ENCODE measurements at regions of chr1 and their contacts with region 1.

Region 1: DNA sequence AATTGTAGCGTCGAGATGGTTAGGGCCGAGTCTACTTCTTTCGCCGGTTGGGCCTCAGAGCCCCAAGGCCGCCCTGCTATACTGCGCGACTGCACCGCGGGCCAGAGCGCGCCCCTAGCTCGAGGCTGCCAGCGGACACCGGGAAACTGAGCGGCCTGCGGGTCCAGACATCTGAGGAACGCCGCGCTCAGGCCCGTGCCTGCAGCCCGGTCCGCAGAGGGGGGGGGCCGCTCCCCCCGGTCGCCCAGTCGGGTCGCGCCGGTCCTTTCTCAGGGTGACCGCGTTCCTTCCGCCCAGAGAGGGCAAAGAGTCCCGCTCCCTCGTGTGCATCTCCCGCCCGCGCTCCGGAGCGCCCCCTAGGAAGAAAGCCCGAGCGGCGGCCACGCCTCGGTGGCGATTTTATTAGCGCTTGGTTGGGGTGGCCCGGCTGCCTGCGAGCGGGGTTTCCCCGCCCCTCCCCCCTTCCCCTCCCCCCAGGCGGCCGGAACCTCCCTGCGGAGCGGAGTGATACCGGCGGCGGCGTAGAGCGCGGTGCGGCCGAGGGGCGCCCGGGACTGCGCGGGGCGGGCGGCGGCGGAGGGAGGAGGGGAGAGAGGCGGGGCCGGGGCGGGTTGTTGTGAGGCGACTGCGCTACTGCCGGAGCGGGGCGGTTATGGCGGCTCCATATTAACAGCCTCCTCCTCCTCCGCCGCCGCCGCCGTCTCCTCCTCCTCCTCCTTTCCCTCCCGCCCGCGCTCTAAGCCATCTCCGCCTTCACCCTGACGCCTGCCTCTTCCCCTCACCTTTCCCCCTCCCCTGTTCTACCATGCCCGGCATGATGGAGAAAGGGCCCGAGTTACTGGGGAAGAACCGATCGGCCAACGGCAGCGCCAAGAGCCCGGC is at the start of gene RCOR3:
- DNase-seq: peak; percentile 88 to 95 (median 92)
- ATAC-seq: peak; percentile 76
- H3K4me3 ChIP-seq: peak within 1 kb of the TSS; percentile 89
- H3K4me3 Mint-ChIP-seq: peak within 1 kb of the TSS; percentile 94
- H3K27ac ChIP-seq: peak within 1 kb of the TSS; percentile 77 to 87
- H3K27ac Mint-ChIP-seq: peak within 1 kb of the TSS; percentile 94
- H3K4me1 ChIP-seq: peaks cover 16% of the 10 kb centered on the region
- H3K4me1 Mint-ChIP-seq: peaks cover 26% of the 10 kb centered on the region
- H3K27me3 ChIP-seq: no peaks in the 10 kb centered on the region
- H3K27me3 Mint-ChIP-seq: no peaks in the 10 kb centered on the region
- CTCF ChIP-seq: peak; percentile 59
- total RNA-seq, gene RCOR3: 55.7 to 60.5 TPM

Region 2: GRCh38 chr1:211092955-211093354 is 166.0 kb before region 1 on chr1:
- CTCF ChIA-PET with region 1: no interaction called
- POLR2A ChIA-PET with region 1: no interaction called
- intact Hi-C with region 1: no loop called
- DNase-seq: no peak
- ATAC-seq: no peak
- H3K4me3 ChIP-seq: no peak overlapping the region
- H3K4me3 Mint-ChIP-seq: no peak overlapping the region
- H3K27ac ChIP-seq: no peak overlapping the region
- H3K27ac Mint-ChIP-seq: no peak overlapping the region
- H3K4me1 ChIP-seq: no peaks in the 10 kb centered on the region
- H3K4me1 Mint-ChIP-seq: no peaks in the 10 kb centered on the region
- H3K27me3 ChIP-seq: peaks cover 0 to 1% of the 10 kb centered on the region in 2 experiments
- H3K27me3 Mint-ChIP-seq: peaks cover 15% of the 10 kb centered on the region
- CTCF ChIP-seq: no peak

Region 3: DNA sequence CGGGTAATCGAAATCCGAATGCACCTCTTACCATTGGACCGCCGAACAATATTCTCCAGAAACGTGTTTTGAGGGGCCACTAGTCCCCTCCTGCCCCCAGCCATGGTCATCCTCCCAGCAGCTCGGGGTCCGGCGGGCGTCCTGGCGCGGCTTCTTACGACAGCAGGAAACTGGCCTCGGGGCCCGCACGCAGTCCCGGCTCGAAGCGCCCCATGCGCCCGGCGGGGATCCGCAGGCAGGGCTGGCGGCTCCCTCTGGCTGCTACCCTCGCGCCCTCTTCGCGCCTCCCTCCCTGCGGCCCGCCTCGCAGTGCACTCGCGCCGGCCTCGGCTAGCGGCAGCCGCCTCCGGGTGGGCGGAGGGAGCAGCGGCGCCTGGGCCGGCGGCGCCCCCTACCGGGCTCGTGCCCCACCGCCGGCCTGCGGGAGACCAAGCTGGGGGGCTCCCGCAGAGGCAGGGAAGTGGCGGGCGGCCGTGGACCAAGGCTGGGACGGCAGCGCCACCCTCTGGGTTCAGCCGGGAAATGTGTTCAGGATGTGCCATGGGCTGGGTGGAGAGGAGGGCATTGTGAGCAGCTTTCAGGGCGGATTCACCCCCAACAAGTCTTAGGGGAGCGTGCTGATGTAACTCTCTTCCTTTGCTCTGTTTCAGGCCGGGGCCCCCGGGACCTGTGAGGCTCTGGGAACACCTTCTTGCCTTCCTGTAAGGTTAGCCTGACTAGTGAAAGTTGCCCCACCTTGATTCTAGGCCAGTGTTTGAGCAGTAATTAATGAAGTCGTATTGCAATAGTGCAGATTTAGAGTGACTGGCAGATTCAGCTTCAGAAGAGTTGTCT is 124.9 kb before region 1 on chr1 and contains the start of gene KCNH1:
- CTCF ChIA-PET with region 1: interaction called, 13 read pairs
- POLR2A ChIA-PET with region 1: interaction called, 5 read pairs
- intact Hi-C with region 1: loop called (anchors 2 kb)
- DNase-seq: peak; percentile 52 to 87 (median 66)
- ATAC-seq: peak; percentile 88
- H3K4me3 ChIP-seq: peak within 1 kb of the TSS; percentile 51
- H3K4me3 Mint-ChIP-seq: peak within 1 kb of the TSS; percentile 71
- H3K27ac ChIP-seq: no peak within 1 kb of the TSS
- H3K27ac Mint-ChIP-seq: no peak within 1 kb of the TSS
- H3K4me1 ChIP-seq: peaks cover 18% of the 10 kb centered on the region
- H3K4me1 Mint-ChIP-seq: peaks cover 9% of the 10 kb centered on the region
- H3K27me3 ChIP-seq: peaks cover 26 to 64% of the 10 kb centered on the region in 2 experiments
- H3K27me3 Mint-ChIP-seq: peaks cover 80% of the 10 kb centered on the region
- CTCF ChIP-seq: peak; percentile 77
- total RNA-seq, gene KCNH1: not detected

Region 4: DNA sequence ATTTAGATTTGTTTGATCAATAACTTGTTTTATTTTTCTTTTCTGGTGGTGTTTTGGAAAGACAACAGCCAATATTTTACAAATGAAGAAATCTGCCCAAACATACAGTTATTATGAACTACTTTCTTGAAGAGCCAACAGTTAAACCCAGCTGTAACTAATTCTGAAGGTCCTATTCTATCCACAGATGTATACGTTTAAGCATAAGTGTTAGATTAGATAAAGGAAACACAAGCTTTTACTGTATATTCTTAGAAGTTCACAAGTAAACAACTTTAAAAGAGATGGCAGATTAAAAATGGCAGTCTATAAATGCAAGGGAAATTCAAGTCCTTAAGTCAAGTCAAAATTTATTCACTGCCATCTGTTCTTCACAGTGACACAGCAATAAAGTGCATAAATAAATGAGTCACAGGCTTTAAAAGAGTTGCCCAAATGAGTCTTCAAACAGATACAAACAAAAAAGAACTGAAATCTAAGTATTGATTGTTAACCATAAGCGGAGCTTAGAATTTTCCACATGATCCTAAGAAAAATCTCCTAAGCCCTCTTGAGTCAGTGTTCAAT is 75.2 kb before region 1 on chr1:
- CTCF ChIA-PET with region 1: no interaction called
- POLR2A ChIA-PET with region 1: no interaction called
- intact Hi-C with region 1: no loop called
- DNase-seq: no peak
- ATAC-seq: no peak
- H3K4me3 ChIP-seq: no peak overlapping the region
- H3K4me3 Mint-ChIP-seq: no peak overlapping the region
- H3K27ac ChIP-seq: no peak overlapping the region
- H3K27ac Mint-ChIP-seq: no peak overlapping the region
- H3K4me1 ChIP-seq: no peaks in the 10 kb centered on the region
- H3K4me1 Mint-ChIP-seq: no peaks in the 10 kb centered on the region
- H3K27me3 ChIP-seq: no peaks in the 10 kb centered on the region
- H3K27me3 Mint-ChIP-seq: peaks cover 14% of the 10 kb centered on the region
- CTCF ChIP-seq: no peak

Region 5: DNA sequence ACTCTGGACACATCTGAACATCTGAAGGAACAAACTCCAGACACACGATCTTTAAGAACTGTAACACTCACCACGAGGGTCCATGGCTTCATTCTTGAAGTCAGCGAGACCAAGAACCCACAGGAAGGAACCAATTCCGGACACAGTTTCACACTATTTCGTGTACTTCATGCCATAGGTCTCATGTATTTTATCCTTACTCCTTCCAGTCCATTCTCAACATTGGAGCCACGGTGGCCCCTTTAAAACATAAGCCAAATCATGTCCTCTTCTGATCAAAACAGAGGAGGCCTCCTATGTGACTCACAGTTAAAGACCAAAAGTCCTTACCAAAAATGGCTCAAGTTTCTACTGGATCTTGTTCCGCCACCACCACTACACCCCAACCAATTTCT is 29.6 kb before region 1 on chr1:
- CTCF ChIA-PET with region 1: interaction called, 8 read pairs
- POLR2A ChIA-PET with region 1: interaction called, 25 read pairs
- intact Hi-C with region 1: loop called in 1 of 2 experiments (anchors 1 kb)
- DNase-seq: peak in 3 of 14 experiments; percentile 2 to 29 (median 19)
- ATAC-seq: peak; percentile 60
- H3K4me3 ChIP-seq: peak overlapping the region; percentile 20
- H3K4me3 Mint-ChIP-seq: peak overlapping the region; percentile 74
- H3K27ac ChIP-seq: peak overlapping the region in 1 of 2 donors; percentile 41
- H3K27ac Mint-ChIP-seq: peak overlapping the region; percentile 86
- H3K4me1 ChIP-seq: peaks cover 16% of the 10 kb centered on the region
- H3K4me1 Mint-ChIP-seq: peaks cover 29% of the 10 kb centered on the region
- H3K27me3 ChIP-seq: no peaks in the 10 kb centered on the region
- H3K27me3 Mint-ChIP-seq: no peaks in the 10 kb centered on the region
- CTCF ChIP-seq: no peak

Region 6: GRCh38 chr1:211382714-211383480 is 123.9 kb after region 1 on chr1:
- CTCF ChIA-PET with region 1: no interaction called
- POLR2A ChIA-PET with region 1: no interaction called
- intact Hi-C with region 1: loop called in 1 of 2 experiments (anchors 5 kb)
- DNase-seq: peak; percentile 55 to 88 (median 73)
- ATAC-seq: peak; percentile 82
- H3K4me3 ChIP-seq: peak overlapping the region; percentile 92
- H3K4me3 Mint-ChIP-seq: peak overlapping the region; percentile 85
- H3K27ac ChIP-seq: peak overlapping the region; percentile 75 to 94
- H3K27ac Mint-ChIP-seq: peak overlapping the region; percentile 86
- H3K4me1 ChIP-seq: peaks cover 8% of the 10 kb centered on the region
- H3K4me1 Mint-ChIP-seq: peaks cover 35% of the 10 kb centered on the region
- H3K27me3 ChIP-seq: no peaks in the 10 kb centered on the region
- H3K27me3 Mint-ChIP-seq: no peaks in the 10 kb centered on the region
- CTCF ChIP-seq: no peak